ENCODE measurements at regions of chr6 and their contacts with region 1.

Region 1: DNA sequence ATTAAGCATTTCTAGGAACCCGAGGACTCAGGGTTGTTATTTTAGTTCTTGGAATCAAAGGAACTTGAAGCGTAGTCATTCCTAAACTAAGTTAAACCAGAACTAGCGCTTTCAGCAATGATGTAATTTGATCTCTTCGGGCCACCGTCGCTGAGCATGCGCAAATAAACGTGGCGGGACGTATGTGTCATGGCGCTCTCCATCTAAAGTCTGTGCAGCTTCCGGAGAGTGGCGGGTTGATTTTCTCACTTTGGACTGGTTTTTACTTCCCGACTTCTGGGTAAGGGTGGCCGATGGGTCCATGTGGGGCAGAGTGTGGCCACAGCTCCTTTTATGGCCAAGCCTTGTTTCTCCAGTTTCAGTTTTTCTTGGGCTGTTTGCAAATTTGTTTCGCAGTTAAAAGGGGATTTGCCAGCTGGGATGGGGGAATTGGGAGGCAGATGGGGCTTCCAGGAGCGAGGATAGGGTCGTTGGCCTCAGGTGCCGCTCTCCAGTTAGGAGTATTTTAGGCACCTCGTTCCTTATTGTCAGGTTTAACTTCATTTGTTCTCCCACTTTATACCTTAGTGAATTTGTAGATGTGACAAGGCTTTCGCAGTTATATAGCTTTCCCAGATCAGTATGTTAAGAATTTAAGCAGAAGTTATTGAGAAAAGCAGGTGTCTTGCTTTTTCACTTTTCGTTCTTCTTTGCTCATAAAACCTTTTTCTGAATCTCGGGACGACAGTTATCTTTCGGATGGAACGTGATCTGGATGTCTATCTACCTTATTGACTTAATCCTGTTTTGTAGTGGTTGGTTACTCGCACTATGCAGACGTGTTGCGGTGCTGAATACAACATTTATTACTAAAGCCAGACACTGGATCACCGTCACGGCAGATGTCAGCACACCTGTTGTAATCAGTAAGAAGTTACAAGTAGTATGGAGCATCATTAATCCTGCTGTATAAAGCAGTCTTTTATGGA is at the start of gene CDKAL1:
- DNase-seq: peak; percentile 94
- H3K4me3 Mint-ChIP-seq: peak within 1 kb of the TSS; percentile 97
- H3K27ac Mint-ChIP-seq: peak within 1 kb of the TSS; percentile 97
- H3K4me1 Mint-ChIP-seq: peaks cover 45% of the 10 kb centered on the region
- H3K27me3 Mint-ChIP-seq: no peaks in the 10 kb centered on the region

Region 2: DNA sequence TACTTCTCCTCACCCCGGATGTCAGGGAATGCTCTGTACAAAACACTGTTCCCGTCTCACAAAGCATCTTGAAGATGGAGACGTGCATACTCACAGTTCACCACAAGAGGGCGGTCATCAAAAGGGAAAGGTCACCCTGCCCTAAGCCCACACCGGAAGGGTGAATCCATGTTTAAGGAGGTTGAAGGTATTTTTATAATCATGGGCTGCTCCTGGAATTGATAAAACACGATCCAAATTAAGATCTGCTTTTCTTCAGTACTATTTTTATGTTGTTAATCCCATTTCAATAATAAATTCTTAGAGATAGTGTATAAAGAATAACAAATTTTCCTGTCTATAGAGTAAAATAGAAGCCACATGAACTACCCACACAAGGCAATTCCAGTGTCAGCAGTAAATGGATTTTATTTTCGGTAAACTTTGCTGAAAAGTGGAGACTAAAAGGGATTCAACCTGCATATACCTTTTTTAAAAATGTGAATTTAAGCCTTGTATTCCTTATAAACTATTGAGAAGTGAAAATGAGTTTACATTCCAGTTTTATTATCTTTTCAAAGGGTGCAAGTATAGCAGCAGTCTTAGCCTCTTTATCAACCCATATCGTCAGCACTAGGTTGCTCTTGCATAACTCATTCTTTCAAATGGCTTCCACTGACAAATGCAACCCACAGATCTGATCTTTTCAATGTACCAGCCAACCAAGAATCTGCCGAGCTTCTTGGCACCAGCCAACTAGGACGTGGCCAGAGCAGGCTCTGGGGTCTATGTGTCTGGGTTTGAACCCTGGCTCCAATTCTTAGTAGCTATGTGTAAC is 242.6 kb before region 1 on chr6:
- CTCF ChIA-PET with region 1: interaction called, 16 read pairs
- DNase-seq: peak; percentile 84
- H3K4me3 Mint-ChIP-seq: no peak overlapping the region
- H3K27ac Mint-ChIP-seq: no peak overlapping the region
- H3K4me1 Mint-ChIP-seq: peaks cover 31% of the 10 kb centered on the region
- H3K27me3 Mint-ChIP-seq: peaks cover 12% of the 10 kb centered on the region

Region 3: DNA sequence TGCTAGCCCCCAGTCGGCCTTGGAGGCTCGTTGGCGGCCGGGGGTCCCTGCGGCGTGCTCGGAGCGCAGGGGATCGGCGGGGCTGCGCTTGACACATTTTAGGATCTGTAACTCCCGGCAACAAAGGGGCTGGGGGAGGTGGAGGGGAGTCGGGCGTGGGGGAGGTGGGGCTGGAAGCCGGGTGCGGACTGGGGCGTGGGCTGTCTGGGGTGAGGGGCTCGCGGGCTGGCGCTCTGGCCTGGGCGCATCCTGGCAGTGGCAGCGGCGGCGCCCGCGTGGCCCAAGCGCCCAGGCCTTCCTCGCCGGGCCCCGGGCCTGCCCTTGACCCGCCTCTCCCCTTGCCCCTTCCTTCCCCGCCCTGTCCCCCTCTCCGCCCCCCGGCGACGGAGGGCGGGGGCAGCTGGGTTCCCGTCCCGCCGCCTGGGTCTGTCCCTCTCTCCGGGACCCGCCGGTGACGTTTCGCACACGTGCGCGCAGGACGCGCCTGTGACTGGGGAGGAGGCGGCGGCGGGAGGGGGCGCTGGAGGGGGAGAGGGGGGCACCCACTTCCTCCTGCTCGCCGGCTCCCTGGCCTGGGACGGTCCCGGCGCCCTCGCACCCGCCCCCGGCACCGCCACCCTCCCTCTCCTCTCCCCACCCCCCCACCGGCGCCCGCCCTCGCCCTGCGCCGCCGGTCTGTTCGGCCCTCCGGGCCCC is 131.4 kb before region 1 on chr6:
- CTCF ChIA-PET with region 1: interaction called, 25 read pairs
- DNase-seq: peak; percentile 94
- H3K4me3 Mint-ChIP-seq: peak overlapping the region; percentile 93
- H3K27ac Mint-ChIP-seq: peak overlapping the region; percentile 92
- H3K4me1 Mint-ChIP-seq: peaks cover 60% of the 10 kb centered on the region
- H3K27me3 Mint-ChIP-seq: no peaks in the 10 kb centered on the region